ENCODE measurements at regions of chr3 and their contacts with region 1.

Region 1: DNA sequence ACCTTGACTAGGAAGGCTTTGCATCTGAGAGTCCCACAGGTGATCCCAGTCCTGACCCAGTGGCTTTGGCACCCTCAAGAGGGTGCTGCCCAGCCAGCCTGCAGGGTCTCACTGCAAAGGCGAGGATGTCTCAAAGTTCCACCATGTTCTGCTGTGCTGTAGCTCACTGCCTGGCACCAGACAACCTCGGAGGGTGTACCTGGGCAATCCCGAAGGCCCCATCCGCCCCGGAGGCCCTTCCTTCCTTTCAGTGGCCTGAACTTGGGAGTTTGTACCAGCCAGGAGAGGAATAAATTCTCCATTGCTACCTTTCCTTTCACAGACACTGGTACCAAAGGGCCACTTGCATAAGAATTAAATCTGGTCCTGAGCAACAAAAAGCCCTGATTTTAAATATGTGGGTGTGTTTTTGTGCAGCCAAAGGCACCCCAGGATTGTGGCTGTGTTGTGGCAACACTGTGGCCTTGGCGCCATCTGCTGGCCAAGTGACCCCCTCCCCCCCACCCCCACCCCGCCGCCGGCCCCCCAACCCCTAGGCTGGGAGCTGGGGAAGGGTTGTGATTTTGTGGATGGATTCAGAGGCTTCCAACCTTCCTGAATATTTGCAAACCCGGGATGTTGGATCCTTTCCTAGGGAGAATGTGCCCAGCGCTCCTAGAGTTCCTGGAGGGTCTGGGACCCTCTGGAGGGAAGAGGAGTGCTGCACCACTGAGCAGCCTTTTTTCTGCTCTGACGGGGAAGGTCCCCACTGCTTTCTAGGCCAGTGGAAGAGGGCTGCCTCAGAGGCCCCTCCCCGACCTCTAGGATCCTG is 9.7 kb upstream of the PTPN23 start:
- DNase-seq: no peak
- ATAC-seq: peak; percentile 87
- H3K4me3 ChIP-seq: no peak overlapping the region
- H3K27ac ChIP-seq: no peak overlapping the region
- H3K4me1 ChIP-seq: no peaks in the 10 kb centered on the region
- H3K27me3 ChIP-seq: no peaks in the 10 kb centered on the region
- CTCF ChIP-seq: peak; percentile 34 to 52 (median 43); a peak in 4 of 6 replicates
- EP300 ChIP-seq: no peak
- POLR2A ChIP-seq: no peak
- RAD21 ChIP-seq: peak; percentile 54

Region 2: DNA sequence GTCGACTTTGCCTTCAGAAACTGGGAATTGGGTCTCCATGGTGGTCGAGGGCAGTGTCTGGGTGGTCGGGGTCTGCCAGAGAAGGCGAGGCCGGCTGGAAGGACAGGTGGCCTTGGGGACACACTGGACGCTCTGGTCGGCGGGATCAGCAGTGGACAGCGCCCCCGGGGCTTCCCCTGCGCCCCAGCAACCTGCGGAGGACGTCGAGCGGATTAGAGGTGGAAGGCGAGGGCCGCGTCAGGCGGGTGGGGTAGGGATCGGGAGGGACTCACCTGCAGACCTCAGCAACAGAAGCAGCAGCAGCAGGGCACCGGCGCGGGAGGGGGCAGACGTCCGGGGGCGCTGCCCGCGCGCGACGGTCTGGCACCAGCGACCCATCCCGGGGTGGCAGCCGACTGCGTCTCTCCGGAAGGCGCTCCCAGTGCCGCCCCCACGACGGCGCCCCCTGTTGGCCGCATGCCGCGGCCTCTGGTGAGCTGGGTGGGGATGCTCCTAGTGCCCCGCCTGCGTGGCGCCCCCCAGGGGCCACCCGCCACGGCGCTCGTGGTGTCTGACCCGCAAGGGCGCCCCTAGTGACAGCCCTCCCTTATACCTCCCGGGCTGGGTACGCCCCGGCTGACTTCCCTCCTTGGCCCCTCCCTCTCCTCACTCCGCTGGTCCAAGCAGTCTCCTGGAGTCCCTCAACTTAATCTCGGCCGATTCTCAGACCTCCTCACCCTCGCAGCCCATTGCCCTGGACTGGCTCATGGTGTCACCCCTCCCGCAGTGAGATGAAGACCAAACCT is 653.5 kb before region 1 on chr3 and contains the start of gene PRSS50:
- CTCF ChIA-PET with region 1: no interaction called
- POLR2A ChIA-PET with region 1: no interaction called
- RAD21 ChIA-PET with region 1: no interaction called
- SMC1A ChIA-PET with region 1: no interaction called
- in situ Hi-C with region 1: loop called (anchors 10 kb)
- intact Hi-C with region 1: no loop called
- DNase-seq: no peak
- ATAC-seq: no peak
- H3K4me3 ChIP-seq: no peak within 1 kb of the TSS
- H3K27ac ChIP-seq: no peak within 1 kb of the TSS
- H3K4me1 ChIP-seq: peaks cover 13% of the 10 kb centered on the region
- H3K27me3 ChIP-seq: no peaks in the 10 kb centered on the region
- CTCF ChIP-seq: peak in 1 of 3 experiments; percentile 42; a peak in 2 of 6 replicates
- EP300 ChIP-seq: no peak
- POLR2A ChIP-seq: no peak
- RAD21 ChIP-seq: no peak
- polyA plus RNA-seq, gene PRSS50: not detected

Region 3: DNA sequence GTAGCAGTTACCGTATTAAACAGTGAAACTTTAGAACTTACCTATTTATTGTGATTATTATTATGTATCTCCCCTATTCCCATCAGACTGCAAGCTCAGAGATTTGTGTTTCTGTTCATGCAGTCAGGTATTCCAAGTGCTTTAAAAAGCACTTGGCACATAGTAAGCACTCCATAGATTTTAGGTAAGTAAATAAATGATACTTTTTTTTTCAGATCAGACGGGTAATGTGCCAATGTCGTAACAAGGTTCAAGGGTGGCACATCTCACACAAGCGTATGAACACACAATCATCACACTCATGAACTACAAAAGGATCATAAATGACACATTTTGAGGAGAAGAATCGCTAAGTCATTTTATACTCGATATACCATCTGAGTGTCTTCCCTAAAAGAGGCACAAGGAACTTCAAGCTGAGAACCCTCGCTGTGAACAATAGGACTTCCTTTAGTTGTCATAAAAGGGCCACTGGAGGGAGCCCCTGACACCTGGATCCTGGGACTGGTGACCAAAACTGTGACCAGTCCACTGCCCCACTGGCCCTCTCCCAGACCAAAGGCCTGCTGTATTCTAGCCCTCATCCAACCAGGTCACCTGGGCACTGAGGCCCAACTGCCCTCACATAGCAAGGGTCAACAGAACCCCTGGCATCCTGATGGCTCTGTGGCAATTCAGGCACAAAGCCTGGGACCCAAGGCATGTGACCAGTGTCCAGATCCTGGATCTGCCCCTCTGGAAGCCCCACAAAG is 120.6 kb before region 1 on chr3:
- CTCF ChIA-PET with region 1: interaction called, 18 read pairs
- POLR2A ChIA-PET with region 1: no interaction called
- RAD21 ChIA-PET with region 1: no interaction called
- SMC1A ChIA-PET with region 1: interaction called, 3 read pairs
- in situ Hi-C with region 1: no loop called
- intact Hi-C with region 1: no loop called
- DNase-seq: no peak
- ATAC-seq: peak; percentile 77
- H3K4me3 ChIP-seq: no peak overlapping the region
- H3K27ac ChIP-seq: no peak overlapping the region
- H3K4me1 ChIP-seq: no peaks in the 10 kb centered on the region
- H3K27me3 ChIP-seq: no peaks in the 10 kb centered on the region
- CTCF ChIP-seq: peak; percentile 43 to 59 (median 45); a peak in 5 of 6 replicates
- EP300 ChIP-seq: no peak
- POLR2A ChIP-seq: no peak
- RAD21 ChIP-seq: peak; percentile 51; the same call in 1 of the 2 replicates

Region 4: GRCh38 chr3:47347217-47347801 is 23.8 kb before region 1 on chr3:
- CTCF ChIA-PET with region 1: interaction called, 3 read pairs
- POLR2A ChIA-PET with region 1: no interaction called
- RAD21 ChIA-PET with region 1: no interaction called
- SMC1A ChIA-PET with region 1: interaction called, 12 read pairs
- in situ Hi-C with region 1: no loop called
- intact Hi-C with region 1: no loop called
- DNase-seq: peak; percentile 82
- ATAC-seq: peak; percentile 92
- H3K4me3 ChIP-seq: 0 out of 2 replicates have a peak overlapping the region, but pooled peaks have one; percentile 25
- H3K27ac ChIP-seq: peak overlapping the region; percentile 56
- H3K4me1 ChIP-seq: peaks cover 22% of the 10 kb centered on the region
- H3K27me3 ChIP-seq: no peaks in the 10 kb centered on the region
- CTCF ChIP-seq: no peak
- EP300 ChIP-seq: peak; percentile 76 to 91
- POLR2A ChIP-seq: no peak
- RAD21 ChIP-seq: no peak